ENCODE measurements at regions of chr7 and their contacts with region 1.

Region 1: DNA sequence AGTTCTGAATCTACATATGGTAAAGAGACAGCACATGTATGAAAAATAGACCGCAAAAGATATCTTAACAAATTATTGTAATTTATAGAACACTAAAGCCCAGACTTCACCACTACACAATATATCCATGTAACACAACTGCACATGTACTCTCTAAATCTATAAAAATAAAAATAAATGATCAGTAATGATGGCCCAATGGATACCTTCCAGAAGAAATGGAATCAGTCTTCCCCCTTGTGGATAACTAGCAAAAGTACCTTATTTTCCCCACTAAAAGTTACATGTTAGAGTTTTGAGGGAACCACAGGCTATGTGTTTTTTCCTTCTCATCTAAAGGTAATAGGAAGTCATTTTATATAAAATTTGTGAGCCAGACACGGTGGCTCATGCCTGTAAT is 25.7 kb downstream of the C7orf25 start:
- DNase-seq: no peak
- ATAC-seq: no peak
- H3K4me3 ChIP-seq: no peak overlapping the region
- H3K4me3 Mint-ChIP-seq: no peak overlapping the region
- H3K27ac ChIP-seq: no peak overlapping the region
- H3K27ac Mint-ChIP-seq: no peak overlapping the region
- H3K4me1 ChIP-seq: peaks cover 10% of the 10 kb centered on the region
- H3K4me1 Mint-ChIP-seq: peaks cover 23% of the 10 kb centered on the region
- H3K27me3 ChIP-seq: peaks cover 0 to 3% of the 10 kb centered on the region in 2 experiments
- H3K27me3 Mint-ChIP-seq: peaks cover 2% of the 10 kb centered on the region
- CTCF ChIP-seq: peak; percentile 13

Region 2: DNA sequence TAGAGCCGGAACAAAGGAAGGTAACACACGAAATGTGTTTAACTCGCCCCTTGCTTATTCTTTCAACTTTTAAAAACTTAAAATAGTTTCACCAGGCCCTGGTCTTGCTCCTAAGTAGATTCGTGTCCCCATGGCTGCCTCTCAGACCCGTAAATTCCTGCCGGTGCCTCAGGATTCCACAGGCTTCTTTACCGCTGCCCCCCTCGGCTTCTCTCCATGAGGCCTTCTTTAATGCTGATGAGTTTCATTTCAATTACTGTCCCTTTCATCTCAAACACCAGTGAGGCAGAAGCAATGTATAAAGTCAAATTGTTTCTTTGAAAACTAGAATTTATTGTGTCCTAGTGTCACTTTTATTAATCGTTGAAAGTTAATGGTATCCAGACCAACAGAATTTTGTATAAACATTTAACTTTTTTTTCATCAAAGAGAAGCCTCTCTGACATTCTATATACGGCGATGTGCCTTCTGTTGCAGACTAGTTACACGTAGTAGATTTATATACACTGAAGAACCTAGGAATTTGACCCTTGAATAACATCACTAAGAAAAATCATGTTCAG is 199.5 kb before region 1 on chr7:
- CTCF ChIA-PET with region 1: no interaction called
- POLR2A ChIA-PET with region 1: no interaction called
- intact Hi-C with region 1: no loop called
- DNase-seq: no peak
- ATAC-seq: no peak
- H3K4me3 ChIP-seq: no peak overlapping the region
- H3K4me3 Mint-ChIP-seq: no peak overlapping the region
- H3K27ac ChIP-seq: no peak overlapping the region
- H3K27ac Mint-ChIP-seq: no peak overlapping the region
- H3K4me1 ChIP-seq: no peaks in the 10 kb centered on the region
- H3K4me1 Mint-ChIP-seq: no peaks in the 10 kb centered on the region
- H3K27me3 ChIP-seq: no peaks in the 10 kb centered on the region
- H3K27me3 Mint-ChIP-seq: peaks cover 6% of the 10 kb centered on the region
- CTCF ChIP-seq: no peak

Region 3: GRCh38 chr7:42911454-42912447 is 25.6 kb after region 1 on chr7 and contains the start of gene C7orf25:
- CTCF ChIA-PET with region 1: no interaction called
- POLR2A ChIA-PET with region 1: no interaction called
- intact Hi-C with region 1: loop called (anchors 1 to 2 kb)
- DNase-seq: peak; percentile 87 to 97 (median 95)
- ATAC-seq: peak; percentile 92
- H3K4me3 ChIP-seq: peak within 1 kb of the TSS; percentile 51 to 65
- H3K4me3 Mint-ChIP-seq: peak within 1 kb of the TSS; percentile 87
- H3K27ac ChIP-seq: peak within 1 kb of the TSS; percentile 54 to 77
- H3K27ac Mint-ChIP-seq: peak within 1 kb of the TSS; percentile 93
- H3K4me1 ChIP-seq: peaks cover 34% of the 10 kb centered on the region
- H3K4me1 Mint-ChIP-seq: peaks cover 50% of the 10 kb centered on the region
- H3K27me3 ChIP-seq: no peaks in the 10 kb centered on the region
- H3K27me3 Mint-ChIP-seq: no peaks in the 10 kb centered on the region
- CTCF ChIP-seq: no peak
- total RNA-seq, gene C7orf25: 2.1 to 2.2 TPM